Activated B cell treated with CpG ODN at 0.5 μM for 24 hours (primary cell): ENCODE measurements at regions of chr16 and their contacts with region 1.

Region 1: DNA sequence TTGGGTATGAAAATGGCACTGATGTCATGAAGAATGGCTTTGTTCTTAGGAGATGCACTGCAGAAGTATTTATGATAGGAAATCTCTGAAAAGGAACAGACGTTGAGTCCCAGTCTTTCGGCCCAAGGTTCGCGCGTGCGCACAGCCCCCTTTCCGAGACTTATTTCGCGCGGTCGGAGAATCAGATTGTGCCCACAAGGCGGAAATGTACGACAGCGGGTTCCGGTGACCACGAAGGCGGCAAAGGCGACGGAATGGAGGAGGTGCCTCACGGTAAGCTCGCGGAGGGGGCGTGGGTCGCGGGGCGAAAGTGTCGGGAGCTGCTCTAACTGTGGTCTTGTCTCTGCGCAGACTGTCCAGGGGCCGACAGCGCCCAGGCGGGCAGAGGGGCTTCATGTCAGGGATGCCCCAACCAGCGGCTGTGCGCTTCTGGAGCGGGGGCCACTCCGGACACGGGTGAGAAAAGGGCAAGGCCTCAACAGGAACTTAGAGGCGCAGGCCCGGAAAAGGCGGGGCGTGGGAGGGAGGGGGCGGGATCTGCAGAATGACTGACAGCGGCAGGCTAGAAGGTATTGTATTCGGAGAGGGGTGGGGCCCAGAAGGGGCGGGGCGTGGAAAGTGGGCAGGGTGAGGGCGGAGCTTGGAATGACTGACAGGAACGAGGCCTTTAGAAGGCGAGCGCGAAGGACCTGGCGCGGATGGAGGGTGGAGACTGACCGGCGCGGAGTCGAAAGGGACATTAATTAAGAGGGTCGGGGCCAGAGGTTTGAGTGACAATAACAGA is at the start of gene NUBP1:
- DNase-seq: peak; percentile 98
- ATAC-seq: peak; percentile 94
- H3K4me3 Mint-ChIP-seq: peak within 1 kb of the TSS; percentile 94
- H3K27ac Mint-ChIP-seq: peak within 1 kb of the TSS; percentile 99
- H3K4me1 Mint-ChIP-seq: peaks cover 69% of the 10 kb centered on the region
- H3K27me3 Mint-ChIP-seq: no peaks in the 10 kb centered on the region
- CTCF ChIP-seq: no peak
- total RNA-seq, gene NUBP1: 74.1 and 77.2 TPM in 2 replicates

Region 2: DNA sequence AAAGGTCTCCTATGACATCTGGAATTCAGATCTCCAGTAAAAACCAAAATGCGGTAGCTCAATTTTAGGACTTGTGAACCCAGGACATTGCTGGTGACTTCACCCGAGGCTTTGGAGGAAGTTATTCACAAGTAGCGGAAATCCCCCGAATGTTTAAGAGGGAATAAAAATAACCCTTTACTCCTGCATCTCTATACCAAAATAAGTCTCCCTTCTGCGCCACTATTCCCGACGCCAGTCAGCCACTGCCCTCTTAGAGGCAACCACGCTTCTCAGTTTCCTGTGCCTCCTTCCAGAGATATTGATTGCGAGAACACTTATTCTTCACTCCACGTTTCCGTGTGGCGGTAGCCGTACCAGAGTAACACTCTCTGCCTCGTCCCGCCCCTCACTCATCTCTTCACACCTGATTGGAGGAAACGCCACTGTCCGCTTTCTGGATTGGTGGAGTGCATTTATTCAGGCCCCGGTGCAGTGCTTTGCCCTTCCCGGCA is 190.8 kb before region 1 on chr16:
- CTCF ChIA-PET with region 1: no interaction called
- POLR2A ChIA-PET with region 1: interaction called, 11 read pairs
- intact Hi-C with region 1: no loop called
- DNase-seq: peak; percentile 69
- ATAC-seq: peak; percentile 97
- H3K4me3 Mint-ChIP-seq: peak overlapping the region; percentile 96
- H3K27ac Mint-ChIP-seq: peak overlapping the region; percentile 98
- H3K4me1 Mint-ChIP-seq: peaks cover 28% of the 10 kb centered on the region
- H3K27me3 Mint-ChIP-seq: no peaks in the 10 kb centered on the region
- CTCF ChIP-seq: no peak

Region 3: GRCh38 chr16:10776280-10776679 is 32.5 kb after region 1 on chr16:
- CTCF ChIA-PET with region 1: no interaction called
- POLR2A ChIA-PET with region 1: interaction called, 16 read pairs
- intact Hi-C with region 1: no loop called
- DNase-seq: no peak
- ATAC-seq: peak; percentile 26
- H3K4me3 Mint-ChIP-seq: no peak overlapping the region
- H3K27ac Mint-ChIP-seq: peak overlapping the region; percentile 9
- H3K4me1 Mint-ChIP-seq: peaks cover 41% of the 10 kb centered on the region
- H3K27me3 Mint-ChIP-seq: no peaks in the 10 kb centered on the region
- CTCF ChIP-seq: no peak

Region 4: GRCh38 chr16:10806698-10807097 is 62.9 kb after region 1 on chr16:
- CTCF ChIA-PET with region 1: no interaction called
- POLR2A ChIA-PET with region 1: interaction called, 6 read pairs
- intact Hi-C with region 1: loop called (anchors 5 kb)
- DNase-seq: no peak
- ATAC-seq: peak; percentile 54
- H3K4me3 Mint-ChIP-seq: peak overlapping the region; percentile 46
- H3K27ac Mint-ChIP-seq: peak overlapping the region; percentile 89
- H3K4me1 Mint-ChIP-seq: peaks cover 79% of the 10 kb centered on the region
- H3K27me3 Mint-ChIP-seq: no peaks in the 10 kb centered on the region
- CTCF ChIP-seq: no peak

Region 5: GRCh38 chr16:10906914-10907756 is 163.3 kb after region 1 on chr16:
- CTCF ChIA-PET with region 1: no interaction called
- POLR2A ChIA-PET with region 1: interaction called, 16 read pairs
- intact Hi-C with region 1: loop called (anchors 1 kb)
- DNase-seq: no peak
- ATAC-seq: no peak
- H3K4me3 Mint-ChIP-seq: no peak overlapping the region
- H3K27ac Mint-ChIP-seq: peak overlapping the region; percentile 64
- H3K4me1 Mint-ChIP-seq: peaks cover 66% of the 10 kb centered on the region
- H3K27me3 Mint-ChIP-seq: no peaks in the 10 kb centered on the region
- CTCF ChIP-seq: no peak

Region 6: GRCh38 chr16:10944249-10945064 is 200.7 kb after region 1 on chr16 and contains the start of gene CLEC16A:
- CTCF ChIA-PET with region 1: no interaction called
- POLR2A ChIA-PET with region 1: interaction called, 18 read pairs
- intact Hi-C with region 1: loop called (anchors 1 kb)
- DNase-seq: peak; percentile 97
- ATAC-seq: peak; percentile 74
- H3K4me3 Mint-ChIP-seq: peak within 1 kb of the TSS; percentile 90
- H3K27ac Mint-ChIP-seq: peak within 1 kb of the TSS; percentile 81
- H3K4me1 Mint-ChIP-seq: peaks cover 83% of the 10 kb centered on the region
- H3K27me3 Mint-ChIP-seq: no peaks in the 10 kb centered on the region
- CTCF ChIP-seq: no peak
- total RNA-seq, gene CLEC16A: 53.4 and 57.6 TPM in 2 replicates